ENCODE measurements at regions of chr12 and their contacts with region 1.

Region 1: DNA sequence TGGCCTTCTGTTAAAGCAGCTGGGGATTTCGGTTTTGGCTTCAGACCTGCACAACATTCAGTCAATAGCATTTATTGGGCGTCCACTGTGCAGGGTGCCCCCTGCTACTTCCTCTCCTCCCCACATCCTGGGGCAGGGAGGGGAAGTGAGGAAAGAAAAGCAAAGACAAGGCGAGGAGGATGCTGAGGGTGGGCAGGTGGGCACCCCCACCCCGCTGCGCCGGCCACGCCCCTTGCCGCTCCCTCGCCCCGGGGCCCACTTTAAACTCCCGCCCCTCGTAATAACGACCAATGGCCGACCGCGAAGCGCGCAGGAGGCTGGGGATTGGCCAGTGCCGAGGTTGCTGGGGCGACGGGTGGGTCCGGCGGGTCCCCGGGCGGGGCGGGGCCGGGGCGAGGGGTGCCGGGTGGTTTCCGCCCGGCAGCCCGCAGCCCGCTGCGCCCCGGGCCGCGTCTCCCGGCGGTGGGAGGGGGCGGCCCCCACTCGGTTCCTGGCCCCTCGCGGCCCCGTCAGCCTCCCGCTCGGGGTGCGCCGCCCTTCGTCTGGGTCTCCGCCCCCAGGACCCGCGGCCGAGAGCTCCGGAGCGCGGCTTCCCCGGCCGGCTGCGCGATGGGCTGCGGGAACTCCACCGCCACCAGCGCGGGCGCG is at the start of gene C12orf75:
- DNase-seq: peak; percentile 83 to 94
- ATAC-seq: peak; percentile 88
- H3K4me3 ChIP-seq: peak within 1 kb of the TSS; percentile 80 to 95
- H3K27ac ChIP-seq: peak within 1 kb of the TSS in 1 of 2 donors; percentile 4
- H3K4me1 ChIP-seq: peaks cover 0 to 2% of the 10 kb centered on the region in 2 donors
- H3K27me3 ChIP-seq: no peaks in the 10 kb centered on the region
- total RNA-seq, gene C12orf75: 75.9 to 153 TPM

Region 2: DNA sequence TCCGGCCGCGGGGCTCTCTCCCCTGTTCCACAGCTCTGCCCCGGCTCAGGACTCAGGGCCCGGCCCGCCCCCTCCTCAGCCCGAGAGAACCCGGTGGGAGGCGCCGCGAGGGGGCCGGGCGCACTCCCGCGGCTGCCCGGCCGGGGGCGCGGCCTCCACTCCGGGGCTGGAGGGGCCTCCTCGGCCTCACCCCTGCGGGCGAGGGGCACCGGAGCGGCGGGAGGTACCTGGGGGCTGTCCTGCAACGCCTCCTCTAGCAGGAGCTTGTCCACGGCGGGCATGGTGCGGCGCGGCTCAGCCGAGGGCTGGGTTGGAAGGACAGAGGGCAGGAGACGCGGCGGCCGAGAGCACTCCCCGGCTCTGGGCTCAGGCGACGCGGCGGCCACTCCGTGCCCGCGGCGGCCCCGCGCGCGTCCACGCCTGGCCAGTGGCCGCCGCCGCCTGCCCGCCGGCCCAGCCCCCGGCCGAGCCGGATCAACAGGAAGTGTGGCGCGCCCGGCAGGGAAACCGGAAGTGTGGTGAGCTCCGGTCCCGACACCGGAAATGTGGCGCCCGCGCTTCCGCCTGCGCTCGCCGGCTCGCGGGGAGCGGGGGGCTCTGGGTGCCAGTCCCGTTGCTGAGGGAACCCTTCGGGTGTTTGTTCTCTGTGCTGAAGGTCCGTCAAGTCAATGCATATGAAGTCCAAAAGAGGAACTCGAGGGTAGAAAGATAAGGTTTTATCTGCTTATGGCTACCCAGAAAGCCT is 94.5 kb before region 1 on chr12 and contains the start of gene APPL2:
- intact Hi-C with region 1: loop called (anchors 5 kb)
- DNase-seq: peak; percentile 96 to 98
- ATAC-seq: peak; percentile 96
- H3K4me3 ChIP-seq: peak within 1 kb of the TSS; percentile 60 to 80
- H3K27ac ChIP-seq: peak within 1 kb of the TSS in 1 of 2 donors; percentile 70
- H3K4me1 ChIP-seq: peaks cover 6 to 11% of the 10 kb centered on the region in 2 donors
- H3K27me3 ChIP-seq: no peaks in the 10 kb centered on the region
- total RNA-seq, gene APPL2: 43.9 to 65.2 TPM

Region 3: DNA sequence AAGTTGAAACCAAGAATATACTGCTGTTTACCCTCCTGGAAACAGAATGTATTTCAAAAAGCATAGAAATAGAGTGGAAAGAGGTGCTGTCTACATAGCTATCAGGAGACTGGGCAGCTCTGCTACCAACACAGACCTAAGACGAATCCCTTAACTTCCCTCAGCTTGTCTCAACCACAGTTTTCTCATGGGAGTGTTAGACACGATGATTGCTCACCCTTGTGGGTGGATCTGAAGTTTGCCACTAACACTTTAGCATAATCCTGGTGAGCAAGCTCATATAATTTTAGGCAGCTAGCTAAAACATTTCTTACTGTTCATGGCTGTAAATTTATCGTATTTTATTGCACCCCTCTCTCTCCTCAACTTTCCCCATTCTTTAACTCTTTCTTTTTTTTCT is 38.6 kb after region 1 on chr12:
- intact Hi-C with region 1: loop called in 1 of 2 experiments (anchors 5 kb)
- DNase-seq: no peak
- ATAC-seq: no peak
- H3K4me3 ChIP-seq: no peak overlapping the region
- H3K27ac ChIP-seq: no peak overlapping the region
- H3K4me1 ChIP-seq: no peaks in the 10 kb centered on the region
- H3K27me3 ChIP-seq: no peaks in the 10 kb centered on the region